Sciatic nerve (tissue), 2 donors: ENCODE measurements at regions of chr2 and their contacts with region 1.

Region 1: DNA sequence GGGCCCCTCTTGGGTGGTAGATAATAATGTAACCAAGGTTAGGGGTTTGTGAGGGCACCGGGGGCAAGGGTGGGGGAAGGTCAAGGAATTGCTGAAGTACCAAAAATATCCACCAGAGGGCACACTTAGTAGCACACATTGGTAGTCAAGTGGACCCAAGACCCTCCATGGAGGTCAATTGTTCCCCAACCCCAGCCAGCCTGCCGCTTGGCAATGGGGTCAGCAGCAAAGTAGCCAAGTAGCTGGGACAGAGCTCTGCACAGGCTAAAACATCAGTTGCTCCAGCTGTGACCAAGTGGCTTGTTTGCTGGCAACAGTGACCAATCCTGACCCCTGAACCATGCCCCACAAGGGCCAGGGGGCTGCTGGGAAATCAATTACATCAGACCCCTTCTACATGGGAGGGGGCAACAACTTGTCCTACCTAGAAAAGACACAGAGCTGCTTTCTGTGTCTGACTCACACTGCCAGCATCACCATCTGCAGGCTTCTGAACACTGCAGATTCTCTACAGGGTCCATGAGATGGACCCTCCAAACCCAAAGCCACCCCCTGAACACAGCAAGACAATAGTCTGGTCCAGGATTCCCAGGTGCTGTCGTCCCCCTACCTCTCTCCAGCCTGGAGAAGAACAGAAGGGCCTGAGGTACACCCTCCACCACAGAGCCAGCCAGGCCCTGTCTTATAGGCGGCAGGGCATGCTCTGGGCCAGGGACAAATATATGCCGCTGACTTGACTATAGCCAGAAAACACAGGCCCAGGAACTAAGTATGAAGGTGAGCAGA is 76.0 kb downstream of the EMX1 start:
- DNase-seq: no peak
- ATAC-seq: peak; percentile 41

Region 2: DNA sequence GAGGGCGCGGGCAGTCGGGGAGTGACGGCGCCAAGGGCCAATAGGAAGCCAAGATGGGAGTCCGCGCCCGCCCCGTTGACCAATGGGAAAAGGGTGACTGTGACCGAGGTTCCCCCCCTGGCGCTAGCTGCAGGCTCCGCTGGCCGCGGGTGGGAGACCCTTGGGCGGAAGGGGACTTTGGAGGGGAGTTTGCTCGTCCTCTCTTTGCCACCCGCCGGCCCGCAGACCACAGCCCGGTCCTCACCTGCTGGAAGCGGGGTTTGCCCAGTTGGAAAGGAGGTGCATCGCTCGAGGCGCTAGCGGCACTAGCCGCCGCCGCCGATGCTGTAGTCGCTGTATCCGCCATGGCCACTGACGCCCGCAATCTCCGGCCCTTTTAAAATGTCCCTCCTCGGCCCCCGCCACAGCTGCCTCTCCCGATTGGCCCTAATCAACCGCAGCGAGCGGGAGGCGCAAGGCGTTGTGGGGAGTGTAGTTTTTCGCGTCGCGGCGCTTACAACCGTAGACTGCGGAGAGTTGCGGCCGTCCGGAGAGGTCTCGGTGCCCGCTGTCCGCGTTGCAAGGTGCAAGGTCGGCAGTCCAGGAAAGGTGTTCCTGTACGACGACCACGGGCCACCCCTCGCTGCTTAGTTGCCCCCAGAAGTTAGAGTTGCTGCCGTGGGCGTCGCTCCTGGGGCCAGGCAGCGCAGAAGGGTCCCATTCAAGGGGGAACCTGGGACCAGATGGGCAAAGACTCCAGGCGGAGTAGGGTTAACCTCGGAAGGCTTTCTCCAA is 78.2 kb after region 1 on chr2 and contains the start of gene SFXN5:
- intact Hi-C with region 1: loop called (anchors 5 kb)
- DNase-seq: peak; percentile 99
- ATAC-seq: peak; percentile 99
- total RNA-seq, gene SFXN5: 19.5 TPM

Region 3: DNA sequence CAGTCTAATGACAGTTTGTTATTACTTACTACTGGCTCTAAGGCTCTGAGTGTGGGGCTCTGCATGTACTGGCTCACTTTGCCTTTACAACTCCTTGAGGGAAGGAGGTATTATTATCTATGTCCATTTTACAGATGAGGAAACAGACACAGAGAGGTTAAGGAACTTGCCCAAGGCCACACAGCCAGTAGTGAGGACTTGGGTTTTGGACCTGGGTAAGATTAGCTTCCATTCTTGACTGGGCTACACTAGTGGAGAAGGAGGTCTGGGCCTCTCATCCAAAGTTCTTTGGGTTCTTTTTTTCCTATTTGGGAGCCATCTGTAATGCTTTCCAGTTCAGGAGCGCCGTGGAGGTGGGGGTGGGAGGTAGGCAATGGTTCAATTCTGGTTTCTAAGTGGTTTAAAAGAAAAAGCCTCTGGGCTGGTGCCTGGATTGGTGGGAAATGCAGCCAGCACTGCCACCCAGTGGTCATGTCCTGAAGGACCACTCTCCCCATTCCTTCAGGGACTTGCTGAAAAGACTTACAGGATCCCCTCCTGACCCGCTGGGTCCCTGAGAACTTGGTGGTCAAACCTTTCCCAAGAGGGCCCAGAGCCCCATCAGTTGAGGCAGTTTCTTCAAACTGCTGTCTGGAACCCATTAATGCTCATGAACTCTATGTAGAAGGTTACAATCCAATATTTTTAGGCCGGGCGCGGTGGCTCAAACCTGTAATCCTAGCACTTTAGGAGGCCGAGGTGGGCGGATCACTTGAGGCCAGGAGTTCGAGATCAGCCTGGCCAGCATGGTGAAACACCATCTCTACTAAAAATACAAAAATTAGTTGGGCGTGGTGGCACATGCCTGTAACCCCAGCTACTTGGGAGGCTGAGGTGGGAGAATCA is 170.4 kb after region 1 on chr2:
- intact Hi-C with region 1: loop called (anchors 5 kb)
- DNase-seq: peak; percentile 77
- ATAC-seq: peak; percentile 84

Region 4: GRCh38 chr2:73176881-73177644 is 183.7 kb after region 1 on chr2:
- intact Hi-C with region 1: loop called (anchors 5 kb)
- DNase-seq: peak; percentile 95
- ATAC-seq: peak; percentile 97